ENCODE measurements at regions of chr19 and their contacts with region 1.

Region 1: DNA sequence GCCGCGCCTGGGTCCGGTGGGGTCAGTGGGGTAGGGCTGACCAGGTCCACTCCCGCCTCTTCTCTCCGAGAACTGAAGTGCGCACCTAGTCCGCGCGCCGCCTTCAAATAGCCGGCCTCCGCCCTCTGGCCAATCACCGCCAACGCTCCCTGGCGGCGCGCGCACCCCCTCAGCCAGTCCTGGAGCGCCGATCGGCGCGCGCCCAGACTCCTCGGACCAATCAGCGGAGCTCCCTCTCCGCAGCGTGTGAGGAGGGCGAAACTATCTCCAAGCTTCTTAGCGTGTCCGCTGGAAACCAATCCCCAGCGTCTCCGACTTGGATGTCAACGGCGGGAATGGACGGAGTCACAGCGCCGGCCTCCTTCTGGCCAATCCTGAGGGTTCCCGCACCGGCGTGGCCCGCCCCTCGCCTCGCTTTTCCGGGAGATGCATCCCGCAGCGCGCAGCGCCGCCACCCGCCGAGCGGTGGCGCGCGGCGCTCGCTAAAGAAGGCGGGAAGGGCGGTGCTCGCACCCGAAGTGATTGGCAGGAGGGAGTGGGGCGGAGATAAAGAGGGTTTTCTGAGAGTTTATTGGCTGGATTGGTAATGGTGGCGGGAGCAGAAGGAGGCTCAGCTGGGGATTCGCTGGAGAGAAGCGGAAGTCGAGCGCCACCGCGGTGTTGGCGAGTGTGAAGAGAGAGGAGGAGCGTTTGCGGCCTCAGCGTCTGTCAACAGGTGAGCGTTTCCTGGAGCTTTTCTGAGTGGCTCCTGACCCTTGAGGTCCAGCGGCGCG is at the start of gene ASF1B:
- DNase-seq: peak; percentile 100
- H3K4me3 ChIP-seq: peak within 1 kb of the TSS; percentile 60 to 96 (median 90)
- H3K4me3 Mint-ChIP-seq: peak within 1 kb of the TSS; percentile 90 to 91
- H3K27ac ChIP-seq: peak within 1 kb of the TSS; percentile 91 to 94
- H3K27ac Mint-ChIP-seq: peak within 1 kb of the TSS; percentile 76 to 98 (median 97)
- H3K4me1 ChIP-seq: peaks cover 46 to 58% of the 10 kb centered on the region in 2 donors
- H3K4me1 Mint-ChIP-seq: peaks cover 56% of the 10 kb centered on the region
- H3K27me3 ChIP-seq: no peaks in the 10 kb centered on the region
- H3K27me3 Mint-ChIP-seq: peaks cover 0 to 1% (median 0%) of the 10 kb centered on the region in 3 donors
- CTCF ChIP-seq: peak; percentile 69
- polyA plus RNA-seq, gene ASF1B: 6.3 to 13.4 (median 9.2) TPM

Region 2: DNA sequence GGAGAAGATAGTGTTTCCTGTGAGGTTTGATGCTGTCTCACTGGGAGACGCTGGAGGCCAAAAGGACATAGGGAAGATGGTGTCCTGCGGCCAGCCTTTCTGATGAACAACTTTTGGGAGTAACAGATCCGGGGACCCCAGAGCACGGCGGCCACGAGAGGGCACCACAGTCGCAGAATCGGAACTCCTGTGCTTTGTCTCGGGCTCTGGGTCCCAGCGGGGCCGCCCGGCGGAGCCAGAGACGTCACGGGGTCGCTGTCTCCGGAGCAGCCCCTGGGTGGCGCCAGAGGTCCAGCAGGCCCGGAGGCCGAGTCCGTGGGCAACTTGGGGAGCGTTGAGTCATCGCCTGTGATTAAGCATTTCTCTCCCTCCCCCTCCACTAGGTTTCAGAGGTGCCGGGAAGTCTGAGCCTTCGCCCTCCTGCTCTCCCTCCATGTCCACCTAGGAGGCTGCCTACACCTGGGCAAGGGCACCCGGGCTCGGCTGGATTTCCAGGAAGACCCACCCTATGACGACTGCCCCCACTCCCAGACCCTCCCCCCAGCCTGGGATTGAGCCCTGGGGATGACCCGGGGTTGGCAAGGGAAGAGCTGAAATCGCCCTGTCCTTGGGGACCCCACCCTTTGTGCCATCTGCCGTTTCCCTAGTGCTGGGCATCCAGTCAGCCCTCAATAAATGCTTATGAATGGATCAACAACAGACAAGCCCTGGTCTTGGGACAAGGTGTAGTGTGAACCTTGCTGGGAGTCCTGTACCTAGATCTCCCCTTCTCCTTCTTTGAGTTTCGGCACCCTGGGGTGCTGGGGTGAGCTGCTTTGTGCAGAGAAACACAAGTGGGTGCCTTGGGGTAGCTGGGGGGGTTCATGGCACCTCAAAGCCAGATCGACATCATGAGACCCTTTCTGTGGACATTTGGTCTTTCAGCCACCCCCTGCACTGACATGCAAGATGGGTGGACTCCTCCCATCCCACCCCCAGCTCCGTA is 256.3 kb before region 1 on chr19:
- intact Hi-C with region 1: loop called in 1 of 2 experiments (anchors 5 kb)
- DNase-seq: peak; percentile 96 to 98 (median 98)
- H3K4me3 ChIP-seq: peak overlapping the region in 2 of 3 experiments; percentile 27 to 64
- H3K4me3 Mint-ChIP-seq: peak overlapping the region; percentile 60 to 78
- H3K27ac ChIP-seq: peak overlapping the region; percentile 50 to 74
- H3K27ac Mint-ChIP-seq: peak overlapping the region; percentile 60 to 93 (median 82)
- H3K4me1 ChIP-seq: peaks cover 31 to 40% of the 10 kb centered on the region in 2 donors
- H3K4me1 Mint-ChIP-seq: peaks cover 33% of the 10 kb centered on the region
- H3K27me3 ChIP-seq: peaks cover 0 to 8% of the 10 kb centered on the region in 2 donors
- H3K27me3 Mint-ChIP-seq: peaks cover 3 to 37% (median 12%) of the 10 kb centered on the region in 3 donors
- CTCF ChIP-seq: peak; percentile 98

Region 3: GRCh38 chr19:14081325-14082093 is 55.2 kb before region 1 on chr19:
- intact Hi-C with region 1: loop called in 1 of 2 experiments (anchors 2 kb)
- DNase-seq: peak; percentile 99 to 100 (median 99)
- H3K4me3 ChIP-seq: peak overlapping the region; percentile 79 to 96 (median 82)
- H3K4me3 Mint-ChIP-seq: peak overlapping the region; percentile 88 to 95
- H3K27ac ChIP-seq: peak overlapping the region; percentile 85
- H3K27ac Mint-ChIP-seq: peak overlapping the region; percentile 91 to 98 (median 94)
- H3K4me1 ChIP-seq: peaks cover 54 to 58% of the 10 kb centered on the region in 2 donors
- H3K4me1 Mint-ChIP-seq: peaks cover 39% of the 10 kb centered on the region
- H3K27me3 ChIP-seq: no peaks in the 10 kb centered on the region
- H3K27me3 Mint-ChIP-seq: peaks cover 0 to 5% (median 2%) of the 10 kb centered on the region in 3 donors
- CTCF ChIP-seq: no peak

Region 4: GRCh38 chr19:14091081-14091812 is 45.4 kb before region 1 on chr19:
- intact Hi-C with region 1: loop called in 1 of 2 experiments (anchors 5 kb)
- DNase-seq: peak; percentile 34 to 54 (median 43)
- H3K4me3 ChIP-seq: peak overlapping the region; percentile 61 to 90 (median 64)
- H3K4me3 Mint-ChIP-seq: peak overlapping the region; percentile 99
- H3K27ac ChIP-seq: peak overlapping the region; percentile 50 to 59
- H3K27ac Mint-ChIP-seq: peak overlapping the region; percentile 83 to 97 (median 94)
- H3K4me1 ChIP-seq: peaks cover 18 to 23% of the 10 kb centered on the region in 2 donors
- H3K4me1 Mint-ChIP-seq: peaks cover 15% of the 10 kb centered on the region
- H3K27me3 ChIP-seq: peaks cover 0 to 2% of the 10 kb centered on the region in 2 donors
- H3K27me3 Mint-ChIP-seq: peaks cover 0 to 6% (median 5%) of the 10 kb centered on the region in 3 donors
- CTCF ChIP-seq: no peak

Region 5: GRCh38 chr19:14117668-14118164 is 19.0 kb before region 1 on chr19 and contains the start of gene PRKACA:
- intact Hi-C with region 1: loop called (anchors 2 kb)
- DNase-seq: peak; percentile 96 to 98 (median 98)
- H3K4me3 ChIP-seq: peak within 1 kb of the TSS; percentile 88 to 99 (median 90)
- H3K4me3 Mint-ChIP-seq: peak within 1 kb of the TSS; percentile 91 to 96
- H3K27ac ChIP-seq: peak within 1 kb of the TSS; percentile 98 to 99
- H3K27ac Mint-ChIP-seq: peak within 1 kb of the TSS; percentile 100
- H3K4me1 ChIP-seq: peaks cover 63 to 69% of the 10 kb centered on the region in 2 donors
- H3K4me1 Mint-ChIP-seq: peaks cover 65% of the 10 kb centered on the region
- H3K27me3 ChIP-seq: no peaks in the 10 kb centered on the region
- H3K27me3 Mint-ChIP-seq: peaks cover 0 to 1% (median 0%) of the 10 kb centered on the region in 3 donors
- CTCF ChIP-seq: no peak
- polyA plus RNA-seq, gene PRKACA: 2.0 to 231 (median 3.8) TPM

Region 6: DNA sequence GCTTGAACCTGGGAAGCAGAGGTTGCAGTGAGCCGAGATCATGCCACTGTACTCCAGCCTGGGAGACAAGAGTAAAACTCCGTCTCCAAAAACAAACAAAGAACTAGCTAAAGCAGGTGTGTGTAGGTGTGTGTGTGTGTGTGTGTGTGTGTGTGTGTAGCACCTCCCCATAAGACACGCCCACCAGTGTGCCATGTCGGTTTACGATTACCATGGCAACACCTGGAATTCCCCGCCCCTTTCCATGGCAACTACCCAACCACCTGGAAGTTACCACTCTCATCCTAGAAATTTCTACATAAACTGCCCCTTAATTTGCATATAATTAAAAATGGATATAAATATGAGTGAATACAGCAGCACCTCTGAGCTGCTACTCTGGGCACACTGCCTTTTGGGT is 163.6 kb after region 1 on chr19:
- intact Hi-C with region 1: no loop called
- DNase-seq: no peak
- H3K4me3 ChIP-seq: no peak overlapping the region
- H3K4me3 Mint-ChIP-seq: no peak overlapping the region
- H3K27ac ChIP-seq: no peak overlapping the region
- H3K27ac Mint-ChIP-seq: no peak overlapping the region
- H3K4me1 ChIP-seq: no peaks in the 10 kb centered on the region
- H3K4me1 Mint-ChIP-seq: peaks cover 6% of the 10 kb centered on the region
- H3K27me3 ChIP-seq: no peaks in the 10 kb centered on the region
- H3K27me3 Mint-ChIP-seq: peaks cover 0 to 20% (median 10%) of the 10 kb centered on the region in 3 donors
- CTCF ChIP-seq: no peak

Measured in CD14-positive monocyte (primary cell).